Activated naive CD4-positive, alpha-beta T cell treated with anti-CD3 and anti-CD28 coated beads for 36 hours (primary cell): ENCODE measurements at regions of chr17 and their contacts with region 1.

Region 1: GRCh38 chr17:57586196-57586740 is 158.8 kb downstream of the CCDC182 start:
- DNase-seq: no peak
- H3K4me3 Mint-ChIP-seq: no peak overlapping the region
- H3K27ac Mint-ChIP-seq: no peak overlapping the region
- H3K4me1 Mint-ChIP-seq: no peaks in the 10 kb centered on the region
- H3K27me3 Mint-ChIP-seq: no peaks in the 10 kb centered on the region

Region 2: GRCh38 chr17:57597531-57598453 is 11.5 kb after region 1 on chr17:
- CTCF ChIA-PET with region 1: interaction called, 10 read pairs
- intact Hi-C with region 1: no loop called
- DNase-seq: peak; percentile 72
- H3K4me3 Mint-ChIP-seq: no peak overlapping the region
- H3K27ac Mint-ChIP-seq: peak overlapping the region; percentile 96
- H3K4me1 Mint-ChIP-seq: peaks cover 51% of the 10 kb centered on the region
- H3K27me3 Mint-ChIP-seq: no peaks in the 10 kb centered on the region

Region 3: DNA sequence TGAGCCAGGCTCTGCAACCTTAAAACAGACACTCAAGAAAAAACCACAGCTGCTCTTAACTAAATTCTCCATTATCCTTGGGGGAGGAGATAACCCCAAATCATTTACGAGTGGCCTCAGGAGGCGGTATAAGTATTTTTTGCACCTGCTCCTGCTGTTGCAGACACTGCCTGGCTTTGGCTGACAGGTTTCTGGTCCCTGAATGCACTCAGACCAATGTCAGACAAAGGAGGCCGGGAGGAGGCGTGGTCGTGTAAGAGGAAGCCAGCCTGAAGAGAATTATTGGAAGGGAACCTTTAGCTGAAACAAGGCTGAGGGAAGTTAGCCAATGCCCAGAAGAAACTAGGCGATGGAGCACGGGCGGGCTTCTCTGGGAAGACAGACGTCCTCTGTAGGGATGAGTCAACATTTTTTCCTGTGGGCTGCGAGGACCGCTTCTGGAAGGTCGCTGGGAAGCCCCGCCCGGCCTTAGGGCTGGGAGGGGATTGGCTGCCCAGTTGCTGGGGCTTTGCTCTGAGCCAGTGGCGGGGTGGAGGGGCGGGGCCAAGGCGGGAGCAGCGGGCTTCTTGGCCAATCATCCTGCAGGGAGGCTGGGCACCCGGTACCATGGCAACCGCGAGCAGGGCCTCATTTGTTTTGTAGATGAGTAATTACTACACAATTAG is 76.5 kb after region 1 on chr17:
- CTCF ChIA-PET with region 1: interaction called, 10 read pairs
- intact Hi-C with region 1: no loop called
- DNase-seq: peak; percentile 17
- H3K4me3 Mint-ChIP-seq: no peak overlapping the region
- H3K27ac Mint-ChIP-seq: no peak overlapping the region
- H3K4me1 Mint-ChIP-seq: peaks cover 2% of the 10 kb centered on the region
- H3K27me3 Mint-ChIP-seq: no peaks in the 10 kb centered on the region

Region 4: GRCh38 chr17:58121925-58122324 is 535.7 kb after region 1 on chr17:
- CTCF ChIA-PET with region 1: no interaction called
- intact Hi-C with region 1: no loop called
- DNase-seq: peak; percentile 40
- H3K4me3 Mint-ChIP-seq: no peak overlapping the region
- H3K27ac Mint-ChIP-seq: no peak overlapping the region
- H3K4me1 Mint-ChIP-seq: peaks cover 6% of the 10 kb centered on the region
- H3K27me3 Mint-ChIP-seq: no peaks in the 10 kb centered on the region